T-cell (primary cell): ENCODE measurements at regions of chr20 and their contacts with region 1.

Region 1: GRCh38 chr20:21235484-21236445 is 67.4 kb upstream of the XRN2 start:
- DNase-seq: peak in 34 of 35 experiments; percentile 10 to 75 (median 51)
- ATAC-seq: peak; percentile 64 to 73 (median 68)
- H3K4me3 ChIP-seq: no peak overlapping the region
- H3K4me3 Mint-ChIP-seq: no peak overlapping the region
- H3K27ac ChIP-seq: no peak overlapping the region
- H3K27ac Mint-ChIP-seq: no peak overlapping the region
- H3K4me1 ChIP-seq: no peaks in the 10 kb centered on the region
- H3K4me1 Mint-ChIP-seq: peaks cover 5 to 6% (median 5%) of the 10 kb centered on the region in 3 donors
- H3K27me3 ChIP-seq: no peaks in the 10 kb centered on the region
- H3K27me3 Mint-ChIP-seq: no peaks in the 10 kb centered on the region

Region 2: GRCh38 chr20:20860078-20860806 is 375.5 kb before region 1 on chr20:
- CTCF ChIA-PET with region 1: interaction called, 5 to 12 read pairs
- POLR2A ChIA-PET with region 1: no interaction called
- DNase-seq: peak; percentile 31 to 84 (median 73)
- ATAC-seq: peak; percentile 59 to 70 (median 64)
- H3K4me3 ChIP-seq: no peak overlapping the region
- H3K4me3 Mint-ChIP-seq: no peak overlapping the region
- H3K27ac ChIP-seq: no peak overlapping the region
- H3K27ac Mint-ChIP-seq: no peak overlapping the region
- H3K4me1 ChIP-seq: peaks cover 0 to 3% of the 10 kb centered on the region in 2 experiments
- H3K4me1 Mint-ChIP-seq: no peaks in the 10 kb centered on the region
- H3K27me3 ChIP-seq: peaks cover 0 to 9% of the 10 kb centered on the region in 2 experiments
- H3K27me3 Mint-ChIP-seq: peaks cover 24 to 34% of the 10 kb centered on the region in 2 donors

Region 3: GRCh38 chr20:21118111-21118510 is 117.7 kb before region 1 on chr20:
- CTCF ChIA-PET with region 1: interaction called in 1 of 2 experiments, 11 read pairs
- POLR2A ChIA-PET with region 1: no interaction called
- DNase-seq: no peak
- ATAC-seq: no peak
- H3K4me3 ChIP-seq: no peak overlapping the region
- H3K4me3 Mint-ChIP-seq: no peak overlapping the region
- H3K27ac ChIP-seq: no peak overlapping the region
- H3K27ac Mint-ChIP-seq: no peak overlapping the region
- H3K4me1 ChIP-seq: no peaks in the 10 kb centered on the region
- H3K4me1 Mint-ChIP-seq: no peaks in the 10 kb centered on the region
- H3K27me3 ChIP-seq: peaks cover 9 to 17% of the 10 kb centered on the region in 2 experiments
- H3K27me3 Mint-ChIP-seq: peaks cover 39 to 57% of the 10 kb centered on the region in 2 donors

Region 4: GRCh38 chr20:21289651-21290050 is 53.9 kb after region 1 on chr20:
- CTCF ChIA-PET with region 1: no interaction called
- POLR2A ChIA-PET with region 1: no interaction called
- DNase-seq: no peak
- ATAC-seq: no peak
- H3K4me3 ChIP-seq: no peak overlapping the region
- H3K4me3 Mint-ChIP-seq: no peak overlapping the region
- H3K27ac ChIP-seq: no peak overlapping the region
- H3K27ac Mint-ChIP-seq: no peak overlapping the region
- H3K4me1 ChIP-seq: no peaks in the 10 kb centered on the region
- H3K4me1 Mint-ChIP-seq: no peaks in the 10 kb centered on the region
- H3K27me3 ChIP-seq: peaks cover 2 to 12% of the 10 kb centered on the region in 2 experiments
- H3K27me3 Mint-ChIP-seq: peaks cover 31 to 36% of the 10 kb centered on the region in 2 donors

Region 5: DNA sequence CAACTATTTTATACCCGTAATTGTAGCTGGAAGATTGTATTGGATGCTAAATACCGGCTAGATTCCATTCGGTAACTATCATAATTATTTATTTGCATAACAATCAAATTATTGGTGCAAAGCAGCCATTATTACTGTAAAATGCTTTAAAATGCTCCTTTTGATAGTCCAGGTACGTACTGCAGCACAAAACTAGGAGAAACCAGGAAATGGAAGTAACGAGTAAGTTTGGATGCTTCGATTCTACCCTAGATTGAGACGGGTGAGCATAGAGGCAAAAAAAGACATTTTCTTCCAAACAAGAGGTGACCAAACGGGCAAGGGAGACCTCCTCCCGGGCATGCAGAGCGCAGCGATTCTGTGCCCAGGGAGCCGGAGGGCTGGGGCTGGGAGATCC is 66.9 kb after region 1 on chr20:
- CTCF ChIA-PET with region 1: no interaction called
- POLR2A ChIA-PET with region 1: no interaction called
- DNase-seq: no peak
- ATAC-seq: peak in 1 of 4 experiments; percentile 1
- H3K4me3 ChIP-seq: peak overlapping the region; percentile 76
- H3K4me3 Mint-ChIP-seq: peak overlapping the region; percentile 93 to 97 (median 95)
- H3K27ac ChIP-seq: peak overlapping the region; percentile 83
- H3K27ac Mint-ChIP-seq: peak overlapping the region; percentile 84 to 99
- H3K4me1 ChIP-seq: peaks cover 7 to 25% of the 10 kb centered on the region in 2 experiments
- H3K4me1 Mint-ChIP-seq: peaks cover 25 to 39% (median 28%) of the 10 kb centered on the region in 3 donors
- H3K27me3 ChIP-seq: peaks cover 0 to 3% of the 10 kb centered on the region in 2 experiments
- H3K27me3 Mint-ChIP-seq: peaks cover 6% of the 10 kb centered on the region in 2 donors

Region 6: DNA sequence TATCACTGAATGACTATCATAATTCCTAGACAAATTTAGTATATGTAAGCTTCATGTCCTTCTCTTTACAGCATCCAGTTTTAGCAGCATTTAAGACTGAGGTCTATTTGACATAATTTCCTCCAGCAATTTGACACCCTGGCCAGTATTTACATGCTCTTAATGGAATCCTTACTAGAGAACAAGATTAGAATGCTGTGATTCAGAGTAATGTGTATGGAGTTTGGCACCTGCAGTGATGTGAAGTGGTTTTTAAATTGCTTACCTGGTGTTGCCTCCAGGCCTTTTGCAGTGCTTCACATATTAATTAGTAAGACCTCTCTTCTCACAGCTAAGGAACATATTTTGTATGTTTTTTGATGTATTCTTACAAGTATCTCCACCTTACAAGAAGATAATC is 151.8 kb after region 1 on chr20:
- CTCF ChIA-PET with region 1: interaction called in 1 of 2 experiments, 13 read pairs
- POLR2A ChIA-PET with region 1: no interaction called
- DNase-seq: no peak
- ATAC-seq: no peak
- H3K4me3 ChIP-seq: no peak overlapping the region
- H3K4me3 Mint-ChIP-seq: no peak overlapping the region
- H3K27ac ChIP-seq: no peak overlapping the region
- H3K27ac Mint-ChIP-seq: no peak overlapping the region
- H3K4me1 ChIP-seq: peaks cover 0 to 6% of the 10 kb centered on the region in 2 experiments
- H3K4me1 Mint-ChIP-seq: peaks cover 8 to 10% (median 9%) of the 10 kb centered on the region in 3 donors
- H3K27me3 ChIP-seq: peaks cover 5% of the 10 kb centered on the region in 2 experiments
- H3K27me3 Mint-ChIP-seq: peaks cover 9 to 11% of the 10 kb centered on the region in 2 donors

Region 7: DNA sequence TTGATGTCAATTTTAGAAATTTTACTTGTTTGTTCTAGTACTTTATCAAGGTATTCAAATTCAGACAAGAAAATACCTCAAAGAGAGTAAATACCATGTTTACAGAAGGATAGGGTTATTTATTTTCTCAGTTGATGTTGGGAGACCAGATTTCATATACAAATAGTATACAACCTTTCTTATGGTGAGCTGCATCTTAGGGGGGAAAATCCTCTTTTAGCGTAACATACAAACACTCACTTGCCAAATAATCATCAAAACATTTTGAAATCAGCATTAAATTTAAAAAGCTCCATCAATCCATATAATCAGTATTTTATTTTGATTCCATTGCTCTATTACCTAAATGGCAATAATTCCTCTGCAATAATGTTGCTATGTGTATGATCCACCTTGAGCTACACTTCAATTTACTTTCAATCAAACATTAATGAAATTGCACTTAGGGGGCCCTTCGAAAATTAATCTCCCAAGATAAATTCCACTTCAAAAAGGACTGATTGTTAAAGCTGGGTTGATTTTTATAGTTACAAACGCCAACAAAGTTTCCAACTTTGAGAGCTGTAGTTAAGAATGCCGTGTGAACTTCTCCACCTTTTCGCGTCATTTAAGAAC is 159.4 kb after region 1 on chr20:
- CTCF ChIA-PET with region 1: interaction called, 3 to 10 read pairs
- POLR2A ChIA-PET with region 1: no interaction called
- DNase-seq: no peak
- ATAC-seq: peak in 1 of 4 experiments; percentile 9
- H3K4me3 ChIP-seq: peak overlapping the region in 1 of 2 donors; percentile 59
- H3K4me3 Mint-ChIP-seq: peak overlapping the region; percentile 60 to 67 (median 64)
- H3K27ac ChIP-seq: no peak overlapping the region
- H3K27ac Mint-ChIP-seq: peak overlapping the region in 1 of 2 donors; percentile 55
- H3K4me1 ChIP-seq: peaks cover 7 to 22% of the 10 kb centered on the region in 2 experiments
- H3K4me1 Mint-ChIP-seq: peaks cover 22 to 28% (median 24%) of the 10 kb centered on the region in 3 donors
- H3K27me3 ChIP-seq: peaks cover 30 to 45% of the 10 kb centered on the region in 2 experiments
- H3K27me3 Mint-ChIP-seq: peaks cover 53 to 63% of the 10 kb centered on the region in 2 donors

Region 8: GRCh38 chr20:21505161-21505809 is 269.5 kb after region 1 on chr20:
- CTCF ChIA-PET with region 1: interaction called, 40 to 66 read pairs
- POLR2A ChIA-PET with region 1: no interaction called
- DNase-seq: peak; percentile 35 to 81 (median 71)
- ATAC-seq: peak; percentile 58 to 68 (median 65)
- H3K4me3 ChIP-seq: peak overlapping the region; percentile 21 to 64
- H3K4me3 Mint-ChIP-seq: peak overlapping the region; percentile 31 to 68 (median 50)
- H3K27ac ChIP-seq: no peak overlapping the region
- H3K27ac Mint-ChIP-seq: no peak overlapping the region
- H3K4me1 ChIP-seq: peaks cover 5 to 28% of the 10 kb centered on the region in 2 experiments
- H3K4me1 Mint-ChIP-seq: peaks cover 19 to 34% (median 32%) of the 10 kb centered on the region in 3 donors
- H3K27me3 ChIP-seq: peaks cover 12 to 78% of the 10 kb centered on the region in 2 experiments
- H3K27me3 Mint-ChIP-seq: peaks cover 52 to 65% of the 10 kb centered on the region in 2 donors

Region 9: GRCh38 chr20:21548390-21549035 is 312.7 kb after region 1 on chr20:
- CTCF ChIA-PET with region 1: interaction called in 1 of 2 experiments, 12 read pairs
- POLR2A ChIA-PET with region 1: no interaction called
- DNase-seq: peak in 32 of 35 experiments; percentile 15 to 84 (median 43)
- ATAC-seq: peak; percentile 91 to 96 (median 95)
- H3K4me3 ChIP-seq: peak overlapping the region in 1 of 2 donors; percentile 30
- H3K4me3 Mint-ChIP-seq: peak overlapping the region; percentile 61 to 74 (median 61)
- H3K27ac ChIP-seq: peak overlapping the region; percentile 86
- H3K27ac Mint-ChIP-seq: peak overlapping the region; percentile 92 to 94
- H3K4me1 ChIP-seq: peaks cover 3 to 27% of the 10 kb centered on the region in 2 experiments
- H3K4me1 Mint-ChIP-seq: peaks cover 40 to 41% (median 41%) of the 10 kb centered on the region in 3 donors
- H3K27me3 ChIP-seq: peaks cover 2 to 3% of the 10 kb centered on the region in 2 experiments
- H3K27me3 Mint-ChIP-seq: no peaks in the 10 kb centered on the region